Natural killer cell (primary cell): ENCODE measurements at regions of chr13 and their contacts with region 1.

Region 1: GRCh38 chr13:42548731-42549551 is 25.0 kb upstream of the TNFSF11 start:
- DNase-seq: peak; percentile 28 to 42
- ATAC-seq: peak; percentile 72 to 95 (median 95)
- H3K4me3 ChIP-seq: no peak overlapping the region
- H3K4me3 Mint-ChIP-seq: peak overlapping the region; percentile 83
- H3K27ac ChIP-seq: peak overlapping the region; percentile 58
- H3K27ac Mint-ChIP-seq: peak overlapping the region; percentile 17 to 88
- H3K4me1 ChIP-seq: peaks cover 25% of the 10 kb centered on the region
- H3K4me1 Mint-ChIP-seq: peaks cover 39 to 53% of the 10 kb centered on the region in 2 donors
- H3K27me3 ChIP-seq: no peaks in the 10 kb centered on the region
- H3K27me3 Mint-ChIP-seq: no peaks in the 10 kb centered on the region
- CTCF ChIP-seq: no peak

Region 2: GRCh38 chr13:42580644-42581043 is 31.7 kb after region 1 on chr13:
- intact Hi-C with region 1: loop called (anchors 2 kb)
- DNase-seq: no peak
- ATAC-seq: peak; percentile 79 to 87 (median 86)
- H3K4me3 ChIP-seq: no peak overlapping the region
- H3K4me3 Mint-ChIP-seq: peak overlapping the region; percentile 65
- H3K27ac ChIP-seq: peak overlapping the region; percentile 65
- H3K27ac Mint-ChIP-seq: peak overlapping the region; percentile 83 to 86
- H3K4me1 ChIP-seq: peaks cover 15% of the 10 kb centered on the region
- H3K4me1 Mint-ChIP-seq: peaks cover 37 to 45% of the 10 kb centered on the region in 2 donors
- H3K27me3 ChIP-seq: no peaks in the 10 kb centered on the region
- H3K27me3 Mint-ChIP-seq: peaks cover 0 to 8% of the 10 kb centered on the region in 2 donors
- CTCF ChIP-seq: no peak